ENCODE measurements at regions of chr17 and their contacts with region 1.

Region 1: GRCh38 chr17:50541716-50542688 is 5.0 kb upstream of the SPATA20 start:
- DNase-seq: peak; percentile 66 to 80
- ATAC-seq: peak; percentile 82 to 85
- H3K4me3 ChIP-seq: peak overlapping the region; percentile 58 to 68 (median 66)
- H3K27ac ChIP-seq: peak overlapping the region; percentile 64 to 80 (median 74)
- H3K4me1 ChIP-seq: peaks cover 9 to 19% of the 10 kb centered on the region in 2 donors
- H3K27me3 ChIP-seq: no peaks in the 10 kb centered on the region
- CTCF ChIP-seq: peak in 2 of 5 experiments; percentile 13 to 18
- POLR2A ChIP-seq: peak; percentile 34 to 52

Region 2: GRCh38 chr17:50452610-50453300 is 89.2 kb before region 1 on chr17:
- in situ Hi-C with region 1: no loop called
- intact Hi-C with region 1: no loop called
- DNase-seq: no peak
- ATAC-seq: no peak
- H3K4me3 ChIP-seq: no peak overlapping the region
- H3K27ac ChIP-seq: no peak overlapping the region
- H3K4me1 ChIP-seq: peaks cover 22 to 26% of the 10 kb centered on the region in 2 donors
- H3K27me3 ChIP-seq: no peaks in the 10 kb centered on the region
- CTCF ChIP-seq: no peak
- POLR2A ChIP-seq: no peak

Region 3: DNA sequence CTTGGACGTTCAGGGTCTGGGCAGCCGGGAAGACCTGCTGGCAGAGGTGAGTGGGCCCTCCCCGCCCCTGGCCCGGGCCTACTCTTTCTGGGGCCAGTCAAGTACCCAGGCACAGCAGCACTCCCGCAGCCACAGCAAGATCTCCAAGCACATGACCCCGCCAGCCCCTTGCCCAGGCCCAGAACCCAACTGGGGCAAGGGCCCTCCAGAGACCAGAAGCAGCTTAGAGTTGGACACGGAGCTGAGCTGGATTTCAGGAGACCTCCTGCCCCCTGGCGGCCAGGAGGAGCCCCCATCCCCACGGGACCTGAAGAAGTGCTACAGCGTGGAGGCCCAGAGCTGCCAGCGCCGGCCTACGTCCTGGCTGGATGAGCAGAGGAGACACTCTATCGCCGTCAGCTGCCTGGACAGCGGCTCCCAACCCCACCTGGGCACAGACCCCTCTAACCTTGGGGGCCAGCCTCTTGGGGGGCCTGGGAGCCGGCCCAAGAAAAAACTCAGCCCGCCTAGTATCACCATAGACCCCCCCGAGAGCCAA is 84.1 kb after region 1 on chr17:
- in situ Hi-C with region 1: loop called in 3 of 4 experiments (anchors 5 to 25 kb)
- intact Hi-C with region 1: loop called (anchors 1 kb)
- DNase-seq: peak; percentile 16 to 64
- ATAC-seq: peak; percentile 79 to 88
- H3K4me3 ChIP-seq: no peak overlapping the region
- H3K27ac ChIP-seq: no peak overlapping the region
- H3K4me1 ChIP-seq: no peaks in the 10 kb centered on the region
- H3K27me3 ChIP-seq: peaks cover 0 to 13% (median 7%) of the 10 kb centered on the region in 3 donors
- CTCF ChIP-seq: peak; percentile 34 to 82 (median 79)
- POLR2A ChIP-seq: no peak

Region 4: GRCh38 chr17:50707289-50708049 is 165.5 kb after region 1 on chr17 and contains the start of gene ANKRD40:
- in situ Hi-C with region 1: no loop called
- intact Hi-C with region 1: loop called (anchors 5 kb)
- DNase-seq: peak; percentile 90 to 93
- ATAC-seq: peak; percentile 94 to 95
- H3K4me3 ChIP-seq: peak within 1 kb of the TSS; percentile 64 to 83 (median 76)
- H3K27ac ChIP-seq: peak within 1 kb of the TSS; percentile 90 to 97 (median 96)
- H3K4me1 ChIP-seq: peaks cover 42 to 43% of the 10 kb centered on the region in 2 donors
- H3K27me3 ChIP-seq: no peaks in the 10 kb centered on the region
- CTCF ChIP-seq: peak in 2 of 5 experiments; percentile 10 to 26
- POLR2A ChIP-seq: peak; percentile 87 to 88
- total RNA-seq, gene ANKRD40: 97.3 to 135 (median 112) TPM

Region 5: DNA sequence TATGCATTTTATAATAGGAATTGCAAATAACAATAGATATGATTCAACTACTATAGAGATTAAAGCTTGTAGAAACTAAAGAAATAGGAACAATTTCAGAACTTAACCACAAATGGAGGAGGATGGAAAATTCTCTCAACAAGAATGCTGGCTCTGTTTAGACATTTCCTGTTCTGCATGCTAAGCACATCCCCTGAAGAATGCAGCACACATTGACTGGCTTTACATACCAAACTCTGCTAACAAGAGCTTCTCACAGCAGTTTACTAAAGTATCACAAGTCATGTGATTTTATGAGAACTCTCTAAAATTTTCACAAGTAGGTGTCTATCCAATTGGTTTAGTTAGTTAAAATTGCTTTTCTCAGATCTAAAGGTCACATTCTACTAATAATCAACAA is 493.4 kb after region 1 on chr17:
- in situ Hi-C with region 1: no loop called
- intact Hi-C with region 1: no loop called
- DNase-seq: no peak
- ATAC-seq: no peak
- H3K4me3 ChIP-seq: no peak overlapping the region
- H3K27ac ChIP-seq: no peak overlapping the region
- H3K4me1 ChIP-seq: peaks cover 0 to 6% of the 10 kb centered on the region in 2 donors
- H3K27me3 ChIP-seq: no peaks in the 10 kb centered on the region
- CTCF ChIP-seq: no peak
- POLR2A ChIP-seq: no peak